ENCODE measurements at regions of chr4 and their contacts with region 1.

Region 1: DNA sequence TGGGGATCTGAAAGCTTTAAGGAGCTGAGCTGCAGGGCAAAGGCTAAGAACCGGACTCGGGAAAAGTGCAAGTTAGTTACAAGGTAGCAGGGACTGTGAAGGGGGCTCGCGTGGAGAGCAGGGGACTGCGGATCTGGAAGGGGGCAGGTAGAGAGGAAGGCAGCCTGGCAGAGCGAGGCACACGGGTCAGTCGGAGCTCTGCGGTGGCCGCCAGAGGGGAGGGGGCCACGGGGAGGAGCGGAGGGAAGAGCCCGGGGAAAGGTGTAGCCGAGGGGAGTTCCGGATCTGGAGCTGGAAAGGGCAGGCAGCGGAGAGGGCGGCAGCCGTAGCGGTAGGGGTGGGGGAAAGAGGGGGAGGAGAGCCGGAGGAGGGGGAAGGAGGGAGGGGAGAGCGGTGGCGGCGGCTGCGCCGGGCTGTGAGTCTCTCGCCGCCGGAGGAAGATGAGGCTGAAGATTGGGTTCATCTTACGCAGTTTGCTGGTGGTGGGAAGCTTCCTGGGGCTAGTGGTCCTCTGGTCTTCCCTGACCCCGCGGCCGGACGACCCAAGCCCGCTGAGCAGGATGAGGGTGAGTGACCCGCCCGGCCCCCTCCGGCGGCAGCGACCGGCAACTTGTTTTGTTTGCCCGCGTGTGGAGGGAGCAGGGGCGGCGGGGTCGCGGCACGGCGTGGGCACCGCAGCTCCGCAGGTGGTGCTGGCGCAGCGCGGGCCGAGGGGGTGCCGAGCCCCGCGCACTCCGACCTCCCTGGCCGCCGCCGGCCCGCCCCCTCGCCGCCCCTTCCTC is at the start of gene GALNT7:
- DNase-seq: peak; percentile 75
- ATAC-seq: peak; percentile 43
- H3K4me3 ChIP-seq: peak within 1 kb of the TSS; percentile 71 to 93 (median 74)
- H3K4me3 Mint-ChIP-seq: peak within 1 kb of the TSS; percentile 97
- H3K27ac ChIP-seq: peak within 1 kb of the TSS; percentile 65 to 85
- H3K27ac Mint-ChIP-seq: peak within 1 kb of the TSS; percentile 95
- H3K4me1 ChIP-seq: peaks cover 26 to 34% of the 10 kb centered on the region in 2 donors
- H3K4me1 Mint-ChIP-seq: peaks cover 40% of the 10 kb centered on the region
- H3K27me3 ChIP-seq: no peaks in the 10 kb centered on the region
- H3K27me3 Mint-ChIP-seq: no peaks in the 10 kb centered on the region
- CTCF ChIP-seq: no peak
- total RNA-seq, gene GALNT7: 23.7 and 26.8 TPM in 2 replicates

Region 2: GRCh38 chr4:173370477-173371291 is 202.1 kb after region 1 on chr4 and contains the start of gene SAP30:
- CTCF ChIA-PET with region 1: interaction called, 4 read pairs
- POLR2A ChIA-PET with region 1: interaction called, 7 read pairs
- intact Hi-C with region 1: loop called (anchors 1 kb)
- DNase-seq: peak; percentile 99
- ATAC-seq: peak; percentile 83
- H3K4me3 ChIP-seq: peak within 1 kb of the TSS; percentile 81 to 100 (median 99)
- H3K4me3 Mint-ChIP-seq: peak within 1 kb of the TSS; percentile 100
- H3K27ac ChIP-seq: peak within 1 kb of the TSS; percentile 84 to 88
- H3K27ac Mint-ChIP-seq: peak within 1 kb of the TSS; percentile 88
- H3K4me1 ChIP-seq: peaks cover 9 to 12% of the 10 kb centered on the region in 2 donors
- H3K4me1 Mint-ChIP-seq: peaks cover 21% of the 10 kb centered on the region
- H3K27me3 ChIP-seq: peaks cover 0 to 2% (median 0%) of the 10 kb centered on the region in 4 experiments
- H3K27me3 Mint-ChIP-seq: peaks cover 3% of the 10 kb centered on the region
- CTCF ChIP-seq: no peak
- total RNA-seq, gene SAP30: 2.5 and 2.7 TPM in 2 replicates

Region 3: DNA sequence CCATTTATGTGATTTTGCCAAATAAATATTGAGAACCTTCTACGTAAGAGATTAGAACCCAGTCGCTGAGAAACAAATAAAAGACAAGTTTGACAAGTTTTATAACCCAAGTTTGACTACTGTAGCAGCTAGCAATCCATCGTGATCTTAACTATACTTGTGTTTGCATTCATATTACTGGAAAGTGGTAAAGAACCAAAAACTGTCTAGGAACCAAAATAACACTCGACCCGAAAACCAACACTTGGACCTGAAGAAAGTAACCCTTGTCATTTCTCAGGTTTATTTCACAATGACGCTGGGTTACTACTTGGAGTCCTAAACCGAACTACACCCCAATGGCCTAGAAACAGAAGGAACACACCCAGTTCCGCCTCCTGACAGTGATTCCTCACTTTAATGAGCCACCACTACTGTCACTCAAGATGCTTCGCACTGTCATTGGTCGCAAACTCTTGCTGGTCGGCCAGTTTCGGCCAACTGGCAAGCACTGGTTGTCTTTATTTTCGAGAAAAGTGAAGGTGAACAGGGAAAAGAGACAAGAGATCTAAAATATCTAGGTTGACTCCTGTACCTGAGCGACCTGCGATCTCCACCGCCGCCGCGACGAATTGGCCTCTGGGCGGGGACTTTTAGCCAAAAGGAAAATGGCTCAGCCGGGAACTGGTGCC is 1114.4 kb after region 1 on chr4:
- CTCF ChIA-PET with region 1: no interaction called
- POLR2A ChIA-PET with region 1: no interaction called
- intact Hi-C with region 1: loop called (anchors 2 kb)
- DNase-seq: peak; percentile 89
- ATAC-seq: peak; percentile 95
- H3K4me3 ChIP-seq: peak overlapping the region; percentile 71 to 100 (median 98)
- H3K4me3 Mint-ChIP-seq: peak overlapping the region; percentile 100
- H3K27ac ChIP-seq: peak overlapping the region; percentile 91 to 98
- H3K27ac Mint-ChIP-seq: peak overlapping the region; percentile 100
- H3K4me1 ChIP-seq: peaks cover 16 to 20% of the 10 kb centered on the region in 2 donors
- H3K4me1 Mint-ChIP-seq: peaks cover 61% of the 10 kb centered on the region
- H3K27me3 ChIP-seq: no peaks in the 10 kb centered on the region
- H3K27me3 Mint-ChIP-seq: no peaks in the 10 kb centered on the region
- CTCF ChIP-seq: no peak